ENCODE measurements at regions of chr6 and their contacts with region 1.

Region 1: GRCh38 chr6:135506270-135506997 is 8.9 kb upstream of the AHI1 start:
- DNase-seq: peak; percentile 12
- H3K4me3 Mint-ChIP-seq: no peak overlapping the region
- H3K27ac Mint-ChIP-seq: no peak overlapping the region
- H3K4me1 Mint-ChIP-seq: peaks cover 2% of the 10 kb centered on the region
- H3K27me3 Mint-ChIP-seq: no peaks in the 10 kb centered on the region

Region 2: DNA sequence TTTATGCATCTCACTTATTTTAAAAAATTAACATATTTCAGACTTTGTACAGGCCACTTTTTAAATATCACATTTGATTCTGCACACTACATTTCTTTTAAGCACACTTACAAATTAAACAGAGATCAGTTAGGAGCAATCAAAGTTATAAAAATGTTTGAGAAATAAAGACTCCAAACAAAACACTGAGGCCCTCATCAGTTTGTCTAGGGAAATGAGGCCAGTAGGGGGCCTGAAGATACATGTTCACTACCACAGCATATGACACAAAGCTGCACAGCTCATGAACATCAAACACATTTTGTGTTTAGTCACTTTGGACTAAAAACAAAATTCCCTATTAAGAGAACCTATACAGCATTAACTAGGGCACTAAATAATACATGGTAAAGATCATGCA is 525.5 kb after region 1 on chr6:
- CTCF ChIA-PET with region 1: no interaction called
- intact Hi-C with region 1: loop called (anchors 2 kb)
- DNase-seq: peak; percentile 26
- H3K4me3 Mint-ChIP-seq: no peak overlapping the region
- H3K27ac Mint-ChIP-seq: no peak overlapping the region
- H3K4me1 Mint-ChIP-seq: no peaks in the 10 kb centered on the region
- H3K27me3 Mint-ChIP-seq: no peaks in the 10 kb centered on the region